ENCODE measurements at regions of chr11 and their contacts with region 1.

Region 1: GRCh38 chr11:13955971-13956421 is 6.5 kb upstream of the SPON1 start:
- DNase-seq: peak; percentile 30
- CTCF ChIP-seq: peak; percentile 79

Region 2: GRCh38 chr11:14249121-14249963 is 293.3 kb after region 1 on chr11:
- in situ Hi-C with region 1: loop called (anchors 5 kb)
- DNase-seq: peak; percentile 60
- CTCF ChIP-seq: peak; percentile 58

Region 3: DNA sequence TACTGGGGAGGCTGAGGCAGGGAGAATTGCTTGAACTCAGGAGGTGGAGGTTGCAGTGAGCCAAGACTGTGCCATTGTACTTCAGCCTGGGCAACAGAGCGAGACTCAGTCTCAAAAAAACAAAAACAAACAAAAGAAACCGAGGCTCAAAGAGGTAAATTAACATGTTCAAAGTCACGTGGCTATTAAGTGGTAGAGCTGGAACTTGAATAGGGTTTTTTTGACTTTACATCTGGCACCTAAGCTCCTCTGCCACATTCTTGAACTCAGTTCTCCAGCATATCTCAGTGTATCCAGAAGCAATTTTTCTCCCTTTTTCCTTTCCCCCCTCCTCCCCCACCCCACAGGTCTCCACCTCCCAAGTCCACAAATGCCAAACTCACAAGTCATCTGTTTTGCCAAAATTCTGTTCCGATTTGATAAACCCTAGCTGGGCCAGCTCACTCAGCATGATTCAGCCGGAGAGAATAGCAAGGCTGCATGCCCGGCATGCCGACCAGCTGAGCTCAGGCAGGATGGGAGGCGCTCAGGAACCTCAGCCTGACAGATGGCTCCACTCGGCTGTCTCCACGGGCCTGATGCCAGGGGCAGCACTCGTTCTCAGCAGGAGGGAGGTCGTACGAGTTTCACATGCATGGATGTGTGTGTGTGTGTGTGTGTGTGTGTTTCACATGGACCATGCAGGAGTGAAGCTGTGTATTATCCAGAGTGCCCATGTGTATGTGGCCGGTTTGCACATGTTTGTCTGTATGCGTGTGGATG is 466.2 kb after region 1 on chr11:
- in situ Hi-C with region 1: loop called (anchors 25 kb)
- DNase-seq: no peak
- CTCF ChIP-seq: no peak